Aorta (tissue), 5 donors: ENCODE measurements at regions of chr18 and their contacts with region 1.

Region 1: DNA sequence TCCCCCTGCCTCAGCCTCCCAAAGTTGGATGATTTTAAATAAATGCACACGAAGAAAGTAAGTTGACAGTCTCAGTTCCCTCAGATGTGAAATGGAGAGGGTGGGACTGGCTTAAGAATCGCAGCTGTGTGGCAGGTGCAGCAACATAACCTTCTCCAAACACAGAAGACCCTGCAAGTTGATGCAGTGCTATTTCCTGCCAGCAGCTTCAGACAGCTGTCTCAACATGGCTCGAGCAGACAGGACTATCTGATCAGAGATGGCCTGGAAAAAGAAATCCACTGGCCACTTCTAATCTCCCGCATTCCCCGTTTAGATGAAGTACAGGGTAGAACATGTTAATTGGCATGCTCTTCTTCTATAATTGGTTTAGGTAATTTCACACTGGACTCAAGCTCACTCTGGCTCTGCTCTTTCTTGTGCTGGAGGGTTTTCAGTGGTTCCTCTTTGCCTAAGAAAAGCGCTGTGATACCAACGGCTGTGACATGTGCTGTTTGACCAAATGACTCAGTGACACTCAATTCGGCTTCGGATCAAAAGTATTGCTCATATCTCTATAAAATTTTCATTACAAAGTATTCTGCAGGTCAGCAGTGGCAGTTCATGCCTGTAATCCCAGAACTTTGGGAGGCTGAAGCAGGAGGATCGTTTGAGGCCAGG is 40.2 kb downstream of the MYOM1 start:
- DNase-seq: no peak
- ATAC-seq: no peak
- H3K4me3 ChIP-seq: no peak overlapping the region
- H3K27ac ChIP-seq: peak overlapping the region; percentile 32 to 74
- H3K4me1 ChIP-seq: peaks cover 0 to 2% of the 10 kb centered on the region in 2 donors
- H3K27me3 ChIP-seq: no peaks in the 10 kb centered on the region

Region 2: DNA sequence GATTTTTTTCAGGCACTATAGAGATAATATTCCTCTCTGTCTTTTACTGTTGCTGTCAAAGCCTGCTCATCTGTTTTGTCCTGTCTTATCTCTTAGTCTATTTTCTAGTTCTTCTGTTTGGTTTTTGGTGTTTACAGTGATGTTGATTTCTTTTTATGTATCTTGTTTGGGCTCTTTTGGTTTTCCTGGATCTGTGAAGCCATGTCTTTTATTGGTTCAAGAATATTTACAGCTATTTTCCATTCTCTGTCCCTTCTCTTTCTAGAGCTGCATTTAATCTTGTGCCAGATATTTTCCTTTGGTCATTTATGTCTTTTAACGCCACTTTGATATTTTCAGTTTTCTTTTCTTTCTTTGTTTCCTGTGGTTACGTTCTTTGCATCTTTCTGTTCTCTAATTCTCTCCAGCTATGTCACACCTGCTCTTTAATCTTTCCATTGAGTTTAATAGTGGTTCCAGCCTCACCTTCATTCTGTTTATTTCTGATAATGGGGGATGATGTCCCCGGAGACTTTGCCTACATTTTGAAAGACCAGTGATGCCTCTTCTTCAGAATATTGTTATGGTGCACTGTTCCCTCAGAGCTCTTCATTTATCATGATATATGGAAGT is 492.1 kb before region 1 on chr18:
- intact Hi-C with region 1: no loop called
- DNase-seq: no peak
- ATAC-seq: no peak
- H3K4me3 ChIP-seq: no peak overlapping the region
- H3K27ac ChIP-seq: no peak overlapping the region
- H3K4me1 ChIP-seq: no peaks in the 10 kb centered on the region
- H3K27me3 ChIP-seq: no peaks in the 10 kb centered on the region

Region 3: GRCh38 chr18:3119401-3120335 is 59.9 kb before region 1 on chr18:
- intact Hi-C with region 1: no loop called
- DNase-seq: no peak
- ATAC-seq: no peak
- H3K4me3 ChIP-seq: no peak overlapping the region
- H3K27ac ChIP-seq: no peak overlapping the region
- H3K4me1 ChIP-seq: no peaks in the 10 kb centered on the region
- H3K27me3 ChIP-seq: no peaks in the 10 kb centered on the region

Region 4: GRCh38 chr18:3217948-3218647 is 38.5 kb after region 1 on chr18:
- intact Hi-C with region 1: loop called in 1 of 2 experiments (anchors 5 kb)
- DNase-seq: no peak
- ATAC-seq: no peak
- H3K4me3 ChIP-seq: peak overlapping the region; percentile 6 to 33
- H3K27ac ChIP-seq: peak overlapping the region in 1 of 2 donors; percentile 8
- H3K4me1 ChIP-seq: peaks cover 0 to 5% of the 10 kb centered on the region in 2 donors
- H3K27me3 ChIP-seq: no peaks in the 10 kb centered on the region

Region 5: GRCh38 chr18:3547891-3548615 is 368.5 kb after region 1 on chr18:
- intact Hi-C with region 1: loop called in 1 of 2 experiments (anchors 5 kb)
- DNase-seq: no peak
- ATAC-seq: no peak
- H3K4me3 ChIP-seq: no peak overlapping the region
- H3K27ac ChIP-seq: no peak overlapping the region
- H3K4me1 ChIP-seq: no peaks in the 10 kb centered on the region
- H3K27me3 ChIP-seq: no peaks in the 10 kb centered on the region